Activated CD8-positive, alpha-beta T cell treated with anti-CD3 and anti-CD28 coated beads, Interleukin-2, amount 10 ng/mL, durations not matched to agents 7 days and 5 days (primary cell): ENCODE measurements at regions of chr11 and their contacts with region 1.

Region 1: GRCh38 chr11:47426061-47426956 is at the start of gene PSMC3:
- DNase-seq: peak; percentile 99
- ATAC-seq: peak; percentile 96
- H3K4me3 Mint-ChIP-seq: peak within 1 kb of the TSS; percentile 100
- H3K27ac Mint-ChIP-seq: peak within 1 kb of the TSS; percentile 100
- H3K4me1 Mint-ChIP-seq: peaks cover 29% of the 10 kb centered on the region
- H3K27me3 Mint-ChIP-seq: no peaks in the 10 kb centered on the region
- total RNA-seq, gene PSMC3: 179 TPM

Region 2: GRCh38 chr11:47454180-47454644 is 27.9 kb after region 1 on chr11:
- CTCF ChIA-PET with region 1: interaction called, 10 read pairs
- POLR2A ChIA-PET with region 1: no interaction called
- DNase-seq: peak; percentile 82
- ATAC-seq: peak; percentile 88
- H3K4me3 Mint-ChIP-seq: no peak overlapping the region
- H3K27ac Mint-ChIP-seq: no peak overlapping the region
- H3K4me1 Mint-ChIP-seq: peaks cover 3% of the 10 kb centered on the region
- H3K27me3 Mint-ChIP-seq: no peaks in the 10 kb centered on the region

Region 3: GRCh38 chr11:47466701-47467250 is 40.5 kb after region 1 on chr11:
- CTCF ChIA-PET with region 1: no interaction called
- POLR2A ChIA-PET with region 1: no interaction called
- DNase-seq: no peak
- ATAC-seq: no peak
- H3K4me3 Mint-ChIP-seq: no peak overlapping the region
- H3K27ac Mint-ChIP-seq: no peak overlapping the region
- H3K4me1 Mint-ChIP-seq: peaks cover 2% of the 10 kb centered on the region
- H3K27me3 Mint-ChIP-seq: no peaks in the 10 kb centered on the region